ENCODE measurements at regions of chr1 and their contacts with region 1.

Region 1: DNA sequence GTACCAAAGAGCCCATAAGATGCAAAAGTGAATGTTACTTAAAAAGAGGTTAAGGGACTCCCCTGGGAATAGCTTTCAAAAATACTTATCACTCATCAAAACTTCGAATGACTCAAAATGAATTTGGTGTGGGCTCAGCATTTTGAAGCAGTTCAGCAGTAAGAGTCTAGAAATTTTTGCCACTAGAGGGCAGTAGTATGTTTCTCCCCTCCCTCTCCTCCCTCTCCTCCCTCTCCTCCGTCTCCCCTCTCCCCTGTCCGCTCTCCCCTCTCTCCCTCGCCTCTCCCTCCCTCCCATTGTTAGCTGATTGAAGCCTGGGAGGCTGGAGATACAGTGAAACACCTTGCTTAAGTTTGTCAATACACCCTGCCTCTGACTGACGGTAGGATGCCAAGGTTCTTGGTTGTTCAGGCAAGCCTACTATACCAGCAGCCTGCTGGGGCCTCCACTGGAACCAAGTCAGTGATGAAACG is 70.8 kb upstream of the TENT5C start:
- DNase-seq: peak; percentile 61 to 68 (median 66)
- H3K4me3 ChIP-seq: no peak overlapping the region
- H3K4me3 Mint-ChIP-seq: peak overlapping the region in 1 of 8 donors; percentile 21
- H3K27ac ChIP-seq: no peak overlapping the region
- H3K27ac Mint-ChIP-seq: peak overlapping the region in 3 of 7 donors; percentile 23 to 53 (median 27)
- H3K4me1 ChIP-seq: peaks cover 21% of the 10 kb centered on the region
- H3K4me1 Mint-ChIP-seq: peaks cover 0 to 6% (median 0%) of the 10 kb centered on the region in 4 donors
- H3K27me3 ChIP-seq: no peaks in the 10 kb centered on the region
- H3K27me3 Mint-ChIP-seq: no peaks in the 10 kb centered on the region

Region 2: GRCh38 chr1:117453958-117454357 is 81.1 kb before region 1 on chr1:
- CTCF ChIA-PET with region 1: no interaction called
- POLR2A ChIA-PET with region 1: no interaction called
- intact Hi-C with region 1: no loop called
- DNase-seq: no peak
- H3K4me3 ChIP-seq: no peak overlapping the region
- H3K4me3 Mint-ChIP-seq: no peak overlapping the region
- H3K27ac ChIP-seq: no peak overlapping the region
- H3K27ac Mint-ChIP-seq: no peak overlapping the region
- H3K4me1 ChIP-seq: no peaks in the 10 kb centered on the region
- H3K4me1 Mint-ChIP-seq: peaks cover 0 to 4% (median under 1%) of the 10 kb centered on the region in 4 donors
- H3K27me3 ChIP-seq: no peaks in the 10 kb centered on the region
- H3K27me3 Mint-ChIP-seq: no peaks in the 10 kb centered on the region

Region 3: GRCh38 chr1:117562581-117563520 is 27.8 kb after region 1 on chr1:
- CTCF ChIA-PET with region 1: interaction called, 20 read pairs
- POLR2A ChIA-PET with region 1: no interaction called
- intact Hi-C with region 1: no loop called
- DNase-seq: no peak
- H3K4me3 ChIP-seq: no peak overlapping the region
- H3K4me3 Mint-ChIP-seq: no peak overlapping the region
- H3K27ac ChIP-seq: no peak overlapping the region
- H3K27ac Mint-ChIP-seq: peak overlapping the region in 1 of 7 donors; percentile 41
- H3K4me1 ChIP-seq: no peaks in the 10 kb centered on the region
- H3K4me1 Mint-ChIP-seq: peaks cover 0 to 4% (median under 1%) of the 10 kb centered on the region in 4 donors
- H3K27me3 ChIP-seq: no peaks in the 10 kb centered on the region
- H3K27me3 Mint-ChIP-seq: no peaks in the 10 kb centered on the region

Region 4: GRCh38 chr1:117590271-117590925 is 55.4 kb after region 1 on chr1:
- CTCF ChIA-PET with region 1: interaction called, 12 read pairs
- POLR2A ChIA-PET with region 1: interaction called, 3 read pairs
- intact Hi-C with region 1: no loop called
- DNase-seq: no peak
- H3K4me3 ChIP-seq: no peak overlapping the region
- H3K4me3 Mint-ChIP-seq: no peak overlapping the region
- H3K27ac ChIP-seq: no peak overlapping the region
- H3K27ac Mint-ChIP-seq: peak overlapping the region in 1 of 7 donors; percentile 47
- H3K4me1 ChIP-seq: no peaks in the 10 kb centered on the region
- H3K4me1 Mint-ChIP-seq: peaks cover 0 to 2% (median 0%) of the 10 kb centered on the region in 4 donors
- H3K27me3 ChIP-seq: no peaks in the 10 kb centered on the region
- H3K27me3 Mint-ChIP-seq: no peaks in the 10 kb centered on the region

Region 5: GRCh38 chr1:117622726-117623125 is 87.7 kb after region 1 on chr1:
- CTCF ChIA-PET with region 1: interaction called, 58 read pairs
- POLR2A ChIA-PET with region 1: interaction called, 5 read pairs
- intact Hi-C with region 1: no loop called
- DNase-seq: no peak
- H3K4me3 ChIP-seq: no peak overlapping the region
- H3K4me3 Mint-ChIP-seq: no peak overlapping the region
- H3K27ac ChIP-seq: no peak overlapping the region
- H3K27ac Mint-ChIP-seq: peak overlapping the region in 1 of 7 donors; percentile 74
- H3K4me1 ChIP-seq: peaks cover 54% of the 10 kb centered on the region
- H3K4me1 Mint-ChIP-seq: peaks cover 34 to 70% (median 55%) of the 10 kb centered on the region in 4 donors
- H3K27me3 ChIP-seq: no peaks in the 10 kb centered on the region
- H3K27me3 Mint-ChIP-seq: no peaks in the 10 kb centered on the region

Region 6: GRCh38 chr1:117674521-117675397 is 139.7 kb after region 1 on chr1:
- CTCF ChIA-PET with region 1: interaction called, 278 read pairs
- POLR2A ChIA-PET with region 1: interaction called, 28 read pairs
- intact Hi-C with region 1: loop called (anchors 1 kb)
- DNase-seq: peak; percentile 64 to 72 (median 66)
- H3K4me3 ChIP-seq: no peak overlapping the region
- H3K4me3 Mint-ChIP-seq: no peak overlapping the region
- H3K27ac ChIP-seq: no peak overlapping the region
- H3K27ac Mint-ChIP-seq: peak overlapping the region in 6 of 7 donors; percentile 3 to 88 (median 74)
- H3K4me1 ChIP-seq: peaks cover 8% of the 10 kb centered on the region
- H3K4me1 Mint-ChIP-seq: peaks cover 5 to 9% (median 7%) of the 10 kb centered on the region in 4 donors
- H3K27me3 ChIP-seq: no peaks in the 10 kb centered on the region
- H3K27me3 Mint-ChIP-seq: peaks cover 0 to 2% of the 10 kb centered on the region in 2 donors

Region 7: GRCh38 chr1:117895482-117896114 is 360.6 kb after region 1 on chr1:
- CTCF ChIA-PET with region 1: interaction called, 18 read pairs
- POLR2A ChIA-PET with region 1: interaction called, 3 read pairs
- intact Hi-C with region 1: no loop called
- DNase-seq: peak; percentile 41 to 59 (median 51)
- H3K4me3 ChIP-seq: no peak overlapping the region
- H3K4me3 Mint-ChIP-seq: no peak overlapping the region
- H3K27ac ChIP-seq: no peak overlapping the region
- H3K27ac Mint-ChIP-seq: peak overlapping the region in 5 of 7 donors; percentile 3 to 66 (median 33)
- H3K4me1 ChIP-seq: no peaks in the 10 kb centered on the region
- H3K4me1 Mint-ChIP-seq: peaks cover 0 to 4% (median 1%) of the 10 kb centered on the region in 4 donors
- H3K27me3 ChIP-seq: no peaks in the 10 kb centered on the region
- H3K27me3 Mint-ChIP-seq: no peaks in the 10 kb centered on the region

Measured in CD4-positive, alpha-beta memory T cell (primary cell).